Activated CD8-positive, alpha-beta T cell treated with anti-CD3 and anti-CD28 coated beads, Interleukin-2, amount 10 ng/mL, durations not matched to agents 7 days and 5 days (primary cell): ENCODE measurements at regions of chr6 and their contacts with region 1.

Region 1: DNA sequence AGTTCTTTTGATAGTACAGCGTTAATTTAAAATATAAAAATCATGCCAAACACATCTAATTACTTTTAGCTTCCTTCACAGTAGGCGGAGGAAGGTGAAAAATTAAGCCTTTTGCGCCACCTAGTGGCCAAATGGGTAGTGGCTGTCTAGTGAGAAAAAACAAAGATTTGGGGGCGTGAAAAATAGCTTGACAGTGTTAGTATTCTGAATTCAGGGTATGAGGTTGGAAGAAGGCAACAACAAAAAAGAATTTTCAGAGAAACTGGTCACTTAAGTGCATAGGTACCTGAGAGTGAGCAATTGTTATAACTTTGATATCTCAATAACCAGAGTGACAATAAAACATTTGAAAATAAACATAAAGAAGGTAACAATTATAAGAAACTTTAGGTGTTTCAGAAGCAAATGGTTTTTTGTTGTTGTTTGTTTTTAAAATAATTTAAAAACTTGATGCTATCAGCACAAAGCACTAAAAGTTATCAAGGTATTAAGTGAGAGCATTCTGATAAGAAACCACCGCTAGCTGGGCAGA is 14.3 kb downstream of the PSMB9 start:
- DNase-seq: peak; percentile 93
- ATAC-seq: peak; percentile 77
- H3K4me3 Mint-ChIP-seq: no peak overlapping the region
- H3K27ac Mint-ChIP-seq: no peak overlapping the region
- H3K4me1 Mint-ChIP-seq: peaks cover 35% of the 10 kb centered on the region
- H3K27me3 Mint-ChIP-seq: peaks cover 3% of the 10 kb centered on the region

Region 2: GRCh38 chr6:32413427-32414047 is 454.8 kb before region 1 on chr6:
- CTCF ChIA-PET with region 1: interaction called, 13 read pairs
- POLR2A ChIA-PET with region 1: no interaction called
- DNase-seq: peak; percentile 87
- ATAC-seq: peak; percentile 82
- H3K4me3 Mint-ChIP-seq: no peak overlapping the region
- H3K27ac Mint-ChIP-seq: no peak overlapping the region
- H3K4me1 Mint-ChIP-seq: peaks cover 8% of the 10 kb centered on the region
- H3K27me3 Mint-ChIP-seq: peaks cover 48% of the 10 kb centered on the region

Region 3: DNA sequence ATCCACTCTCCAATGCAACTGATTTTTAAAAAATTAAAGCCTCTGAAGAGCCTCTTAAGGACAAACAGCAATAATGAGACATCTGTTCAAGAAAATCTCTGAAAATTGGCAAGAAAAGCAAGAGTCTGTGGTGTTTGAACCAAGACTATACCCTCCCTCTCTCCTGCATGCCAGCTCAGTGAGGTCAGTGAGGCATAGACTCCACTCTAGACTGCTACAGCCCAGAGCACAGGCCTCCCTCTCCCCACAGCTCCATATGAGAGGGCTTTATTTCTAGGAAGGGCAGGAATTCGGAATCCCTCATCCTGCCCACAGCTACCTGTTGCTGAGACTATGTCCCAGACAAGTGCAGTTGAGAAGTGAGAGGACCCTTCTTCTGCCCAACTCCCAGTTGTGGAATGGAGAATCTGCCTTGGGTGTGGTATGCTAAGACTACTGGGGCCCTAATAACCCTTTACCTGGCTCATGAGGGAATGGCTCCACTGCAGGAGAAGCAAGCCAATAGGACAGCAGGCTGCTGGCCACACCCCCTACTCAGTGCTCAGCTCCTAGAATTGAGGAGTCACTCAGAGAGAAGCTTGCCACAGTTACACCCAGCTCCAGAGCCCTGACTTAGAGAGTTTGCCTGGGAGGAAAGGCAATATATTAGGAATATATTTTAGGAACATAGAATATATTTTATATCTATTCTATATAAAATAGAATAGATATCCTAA is 253.8 kb before region 1 on chr6:
- CTCF ChIA-PET with region 1: no interaction called
- POLR2A ChIA-PET with region 1: no interaction called
- DNase-seq: no peak
- ATAC-seq: no peak
- H3K4me3 Mint-ChIP-seq: no peak overlapping the region
- H3K27ac Mint-ChIP-seq: no peak overlapping the region
- H3K4me1 Mint-ChIP-seq: peaks cover 6% of the 10 kb centered on the region
- H3K27me3 Mint-ChIP-seq: peaks cover 10% of the 10 kb centered on the region

Region 4: GRCh38 chr6:32709625-32710024 is 158.7 kb before region 1 on chr6:
- CTCF ChIA-PET with region 1: interaction called, 14 read pairs
- POLR2A ChIA-PET with region 1: no interaction called
- DNase-seq: no peak
- ATAC-seq: no peak
- H3K4me3 Mint-ChIP-seq: no peak overlapping the region
- H3K27ac Mint-ChIP-seq: no peak overlapping the region
- H3K4me1 Mint-ChIP-seq: no peaks in the 10 kb centered on the region
- H3K27me3 Mint-ChIP-seq: peaks cover 32% of the 10 kb centered on the region

Region 5: GRCh38 chr6:32825966-32826365 is 42.4 kb before region 1 on chr6:
- CTCF ChIA-PET with region 1: interaction called, 57 read pairs
- POLR2A ChIA-PET with region 1: interaction called, 3 read pairs
- DNase-seq: no peak
- ATAC-seq: no peak
- H3K4me3 Mint-ChIP-seq: no peak overlapping the region
- H3K27ac Mint-ChIP-seq: no peak overlapping the region
- H3K4me1 Mint-ChIP-seq: peaks cover 15% of the 10 kb centered on the region
- H3K27me3 Mint-ChIP-seq: no peaks in the 10 kb centered on the region

Region 6: DNA sequence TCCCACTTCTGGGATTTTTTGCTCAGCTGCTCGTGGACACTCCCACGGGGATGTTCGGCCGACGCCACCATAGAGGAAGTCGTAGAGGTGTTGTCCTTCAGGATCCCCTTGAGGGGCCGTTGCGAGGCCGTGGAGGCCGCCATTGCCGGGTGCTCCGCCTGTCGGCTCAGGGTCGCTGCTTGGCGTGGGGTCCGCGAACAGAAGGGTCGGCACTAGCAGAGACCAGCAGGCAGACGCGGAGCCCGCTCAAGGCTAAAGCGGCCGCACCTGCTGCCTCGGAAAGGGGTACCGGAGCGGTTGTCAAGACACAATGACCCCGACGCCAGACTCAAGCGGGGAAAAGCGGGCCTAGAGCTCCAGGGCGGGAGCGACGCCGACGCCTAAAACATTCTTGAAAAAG is 11.4 kb after region 1 on chr6:
- CTCF ChIA-PET with region 1: interaction called, 22 read pairs
- POLR2A ChIA-PET with region 1: no interaction called
- DNase-seq: no peak
- ATAC-seq: no peak
- H3K4me3 Mint-ChIP-seq: no peak overlapping the region
- H3K27ac Mint-ChIP-seq: no peak overlapping the region
- H3K4me1 Mint-ChIP-seq: no peaks in the 10 kb centered on the region
- H3K27me3 Mint-ChIP-seq: no peaks in the 10 kb centered on the region

Region 7: GRCh38 chr6:32952817-32953739 is 84.8 kb after region 1 on chr6 and contains the start of gene HLA-DMA:
- CTCF ChIA-PET with region 1: interaction called, 49 read pairs
- POLR2A ChIA-PET with region 1: interaction called, 5 read pairs
- DNase-seq: peak; percentile 85
- ATAC-seq: peak; percentile 98
- H3K4me3 Mint-ChIP-seq: peak within 1 kb of the TSS; percentile 77
- H3K27ac Mint-ChIP-seq: peak within 1 kb of the TSS; percentile 83
- H3K4me1 Mint-ChIP-seq: peaks cover 62% of the 10 kb centered on the region
- H3K27me3 Mint-ChIP-seq: no peaks in the 10 kb centered on the region
- total RNA-seq, gene HLA-DMA: 28.6 to 30.5 TPM